ENCODE measurements at regions of chr7 and their contacts with region 1.

Region 1: GRCh38 chr7:2314209-2314955 is at the start of gene SNX8:
- DNase-seq: peak; percentile 82 to 90 (median 84)
- H3K4me3 ChIP-seq: peak within 1 kb of the TSS; percentile 63 to 83 (median 78)
- H3K4me3 Mint-ChIP-seq: peak within 1 kb of the TSS; percentile 91 to 99
- H3K27ac ChIP-seq: peak within 1 kb of the TSS; percentile 36 to 78
- H3K27ac Mint-ChIP-seq: peak within 1 kb of the TSS in 6 of 7 donors; percentile 64 to 92 (median 85)
- H3K4me1 ChIP-seq: peaks cover 11 to 23% of the 10 kb centered on the region in 2 donors
- H3K4me1 Mint-ChIP-seq: peaks cover 34% of the 10 kb centered on the region
- H3K27me3 ChIP-seq: no peaks in the 10 kb centered on the region
- H3K27me3 Mint-ChIP-seq: peaks cover 1 to 6% (median 2%) of the 10 kb centered on the region in 3 donors
- CTCF ChIP-seq: no peak
- polyA plus RNA-seq, gene SNX8: 15.4 to 43.7 (median 41.9) TPM

Region 2: DNA sequence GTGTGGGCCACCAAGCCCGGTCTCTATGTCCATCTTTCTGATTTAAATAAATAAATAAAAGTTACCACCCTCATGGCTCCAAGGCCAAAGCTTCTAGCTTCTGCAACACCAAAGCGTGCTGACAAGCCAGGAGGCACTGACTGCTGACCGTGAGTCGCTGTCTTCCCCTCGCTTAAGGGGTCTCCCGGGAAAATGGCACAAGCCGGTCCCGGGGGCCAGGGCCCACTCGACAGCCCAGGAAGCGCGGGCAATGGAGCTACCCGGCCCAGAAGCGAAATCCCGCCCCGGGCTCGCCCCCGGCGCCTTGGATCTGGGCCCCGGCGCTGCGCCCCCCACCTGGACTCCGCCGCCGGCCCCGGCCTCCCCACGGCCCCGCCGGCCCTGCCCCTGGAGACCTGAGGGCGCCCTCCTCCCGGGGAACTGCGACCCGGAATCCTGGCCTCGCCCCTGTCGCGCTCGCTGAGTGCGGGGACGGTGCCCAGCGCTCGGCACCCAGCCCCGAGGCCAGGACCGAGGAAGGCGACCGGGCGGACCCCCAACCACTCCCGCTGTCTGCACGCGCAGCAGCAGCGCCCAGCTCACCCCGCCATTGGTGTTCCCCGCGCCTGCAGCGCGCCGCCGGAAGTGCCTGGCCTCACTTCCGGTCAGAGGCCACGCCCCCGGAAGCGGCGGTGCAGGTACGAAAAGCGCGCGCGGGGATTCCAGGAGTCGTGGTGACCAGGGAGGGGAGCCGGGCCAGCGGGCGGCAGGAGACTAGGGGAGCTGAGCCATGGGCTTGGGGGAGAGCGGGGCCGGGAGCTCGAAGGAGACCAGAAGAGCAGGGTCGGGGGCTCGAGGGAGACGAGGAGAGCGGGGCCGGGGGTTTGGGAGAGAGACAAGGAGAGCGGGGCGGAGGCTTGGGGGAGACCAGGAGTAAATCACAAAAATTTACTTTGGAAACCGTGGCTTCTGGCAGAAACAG is 72.5 kb before region 1 on chr7 and contains the starts of genes MRM2 and NUDT1:
- intact Hi-C with region 1: loop called (anchors 5 kb)
- DNase-seq: peak; percentile 67 to 81 (median 77)
- H3K4me3 ChIP-seq: peak within 1 kb of the TSS; percentile 77 to 93 (median 86)
- H3K4me3 Mint-ChIP-seq: peak within 1 kb of the TSS; percentile 91 to 92
- H3K27ac ChIP-seq: peak within 1 kb of the TSS; percentile 37 to 82
- H3K27ac Mint-ChIP-seq: peak within 1 kb of the TSS; percentile 79 to 95 (median 90)
- H3K4me1 ChIP-seq: peaks cover 74 to 77% of the 10 kb centered on the region in 2 donors
- H3K4me1 Mint-ChIP-seq: peaks cover 76% of the 10 kb centered on the region
- H3K27me3 ChIP-seq: no peaks in the 10 kb centered on the region
- H3K27me3 Mint-ChIP-seq: peaks cover 0 to 6% (median 0%) of the 10 kb centered on the region in 3 donors
- CTCF ChIP-seq: no peak
- polyA plus RNA-seq, gene MRM2: 9.2 to 32.5 (median 26.7) TPM
- polyA plus RNA-seq, gene NUDT1: 19.6 to 42.6 (median 40.8) TPM

Region 3: DNA sequence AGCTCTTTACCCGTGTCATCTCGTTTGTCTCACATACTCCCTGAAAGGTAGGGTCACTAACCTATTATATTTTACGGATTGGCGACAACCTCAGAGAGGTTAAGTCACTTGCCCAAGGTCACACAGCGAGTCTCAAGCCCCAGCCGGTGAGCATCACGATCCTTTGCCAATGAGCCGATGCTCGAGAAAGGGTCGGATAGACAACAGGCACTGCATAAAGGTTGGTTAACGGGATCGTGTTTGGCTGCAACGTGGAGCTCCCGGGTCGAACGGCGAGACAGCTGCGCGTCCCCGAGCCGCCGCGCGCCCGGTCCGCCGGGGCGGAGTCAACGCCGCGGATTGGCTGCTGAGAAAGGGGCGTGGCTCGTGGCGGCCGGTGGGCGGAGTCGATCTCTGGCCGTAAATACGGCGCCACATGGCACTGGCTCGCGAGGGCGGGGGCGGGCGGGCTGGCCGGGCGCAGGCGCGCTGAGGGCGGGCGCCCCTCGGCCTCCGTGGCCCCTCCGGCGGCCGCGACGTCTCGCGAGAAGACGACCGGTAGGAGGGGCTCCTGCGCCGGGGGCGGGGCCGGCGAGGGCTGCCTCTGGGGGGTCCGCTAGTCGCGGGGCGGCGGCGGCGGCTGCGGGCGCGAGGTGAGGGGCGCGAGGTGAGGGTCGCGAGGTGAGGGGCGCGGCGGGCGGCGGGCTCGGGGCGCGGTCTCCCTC is 88.8 kb after region 1 on chr7 and contains the start of gene CHST12:
- intact Hi-C with region 1: loop called in 1 of 2 experiments (anchors 5 kb)
- DNase-seq: peak; percentile 89 to 93 (median 89)
- H3K4me3 ChIP-seq: peak within 1 kb of the TSS; percentile 68 to 85 (median 78)
- H3K4me3 Mint-ChIP-seq: peak within 1 kb of the TSS; percentile 82 to 90
- H3K27ac ChIP-seq: peak within 1 kb of the TSS in 1 of 2 donors; percentile 70
- H3K27ac Mint-ChIP-seq: peak within 1 kb of the TSS in 6 of 7 donors; percentile 10 to 66 (median 54)
- H3K4me1 ChIP-seq: peaks cover 66 to 69% of the 10 kb centered on the region in 2 donors
- H3K4me1 Mint-ChIP-seq: peaks cover 67% of the 10 kb centered on the region
- H3K27me3 ChIP-seq: no peaks in the 10 kb centered on the region
- H3K27me3 Mint-ChIP-seq: peaks cover 0 to 1% (median 0%) of the 10 kb centered on the region in 3 donors
- CTCF ChIP-seq: no peak
- polyA plus RNA-seq, gene CHST12: 5.8 to 10.6 (median 7.5) TPM

Measured in CD14-positive monocyte (primary cell).